Heart right ventricle (tissue), 16 donors: ENCODE measurements at regions of chr11 and their contacts with region 1.

Region 1: GRCh38 chr11:87223816-87224215 is 186.1 kb downstream of the TMEM135 start:
- DNase-seq: no peak
- ATAC-seq: no peak
- H3K4me3 ChIP-seq: no peak overlapping the region
- H3K27ac ChIP-seq: no peak overlapping the region
- H3K4me1 ChIP-seq: peaks cover 0 to 11% (median 0%) of the 10 kb centered on the region in 9 donors
- H3K27me3 ChIP-seq: no peaks in the 10 kb centered on the region
- CTCF ChIP-seq: no peak

Region 2: DNA sequence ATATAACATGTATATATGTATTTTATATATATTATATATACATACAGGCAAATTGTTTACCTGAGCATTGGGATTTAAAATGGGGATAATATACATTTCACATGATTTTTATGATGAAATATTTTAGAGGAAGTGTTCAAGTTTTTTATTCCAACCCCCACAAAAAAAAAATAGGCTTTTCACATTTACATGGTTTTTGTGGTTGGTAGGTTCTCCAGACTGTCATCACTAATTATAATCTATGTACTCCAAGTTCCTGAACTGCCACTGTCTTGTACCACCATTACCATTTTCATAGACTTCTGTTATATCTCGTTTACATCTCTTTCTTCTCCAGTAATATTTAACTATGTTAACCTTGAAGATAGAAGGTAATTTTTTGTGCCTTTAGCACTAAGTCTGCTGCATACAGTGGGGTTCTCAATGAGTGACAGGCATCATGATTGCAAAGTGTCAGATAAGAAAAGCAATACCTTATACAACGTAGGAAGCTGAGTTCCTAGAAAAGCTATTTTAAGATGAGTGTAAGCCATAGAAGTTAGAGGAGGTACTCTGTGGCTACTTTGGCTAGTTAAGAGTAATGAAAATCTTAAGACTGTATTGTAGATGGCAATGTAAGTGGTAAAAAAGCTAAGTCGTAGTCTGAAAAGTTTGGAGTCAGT is 1570.9 kb before region 1 on chr11:
- intact Hi-C with region 1: loop called in 1 of 10 experiments (anchors 5 kb)
- DNase-seq: no peak
- ATAC-seq: no peak
- H3K4me3 ChIP-seq: no peak overlapping the region
- H3K27ac ChIP-seq: no peak overlapping the region
- H3K4me1 ChIP-seq: peaks cover 0 to 32% (median 21%) of the 10 kb centered on the region in 9 donors
- H3K27me3 ChIP-seq: no peaks in the 10 kb centered on the region
- CTCF ChIP-seq: no peak

Region 3: GRCh38 chr11:86698639-86699400 is 525.0 kb before region 1 on chr11:
- intact Hi-C with region 1: no loop called
- DNase-seq: no peak
- ATAC-seq: no peak
- H3K4me3 ChIP-seq: no peak overlapping the region
- H3K27ac ChIP-seq: no peak overlapping the region
- H3K4me1 ChIP-seq: peaks cover 0 to 22% (median 10%) of the 10 kb centered on the region in 9 donors
- H3K27me3 ChIP-seq: no peaks in the 10 kb centered on the region
- CTCF ChIP-seq: no peak

Region 4: DNA sequence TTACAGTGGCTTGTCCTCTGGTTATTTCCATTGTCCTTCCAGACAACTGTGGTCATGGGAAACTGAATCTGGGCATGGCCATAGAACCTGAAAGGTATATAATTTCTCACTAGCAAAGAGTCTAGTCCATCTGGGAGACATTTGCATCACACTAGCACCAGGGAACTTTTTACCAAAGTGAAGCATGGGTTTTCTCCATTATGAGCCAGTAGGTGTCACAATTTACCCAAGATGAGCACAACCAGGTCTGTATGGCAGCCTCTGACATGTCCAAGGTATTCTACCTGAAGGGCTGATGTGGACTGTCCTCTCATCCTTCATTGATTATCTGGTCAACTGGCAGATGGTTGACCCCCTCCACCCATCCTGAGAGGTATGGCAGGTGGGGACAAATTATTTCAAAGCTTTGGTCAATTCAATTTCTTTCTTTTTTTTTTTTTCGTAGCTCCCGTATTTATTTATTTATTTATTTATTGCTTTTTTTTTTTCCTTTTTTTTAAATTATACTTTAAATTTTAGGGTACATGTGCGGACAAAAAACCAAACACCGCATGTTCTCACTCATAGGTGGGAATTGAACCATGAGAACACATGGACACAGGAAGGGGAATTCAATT is 239.8 kb after region 1 on chr11:
- intact Hi-C with region 1: no loop called
- DNase-seq: no peak
- ATAC-seq: no peak
- H3K4me3 ChIP-seq: no peak overlapping the region
- H3K27ac ChIP-seq: no peak overlapping the region
- H3K4me1 ChIP-seq: peaks cover 0 to 6% (median 0%) of the 10 kb centered on the region in 9 donors
- H3K27me3 ChIP-seq: no peaks in the 10 kb centered on the region
- CTCF ChIP-seq: peak in 1 of 9 donors; percentile 26